PC-9 (cell line): ENCODE measurements at regions of chr7 and their contacts with region 1.

Region 1: DNA sequence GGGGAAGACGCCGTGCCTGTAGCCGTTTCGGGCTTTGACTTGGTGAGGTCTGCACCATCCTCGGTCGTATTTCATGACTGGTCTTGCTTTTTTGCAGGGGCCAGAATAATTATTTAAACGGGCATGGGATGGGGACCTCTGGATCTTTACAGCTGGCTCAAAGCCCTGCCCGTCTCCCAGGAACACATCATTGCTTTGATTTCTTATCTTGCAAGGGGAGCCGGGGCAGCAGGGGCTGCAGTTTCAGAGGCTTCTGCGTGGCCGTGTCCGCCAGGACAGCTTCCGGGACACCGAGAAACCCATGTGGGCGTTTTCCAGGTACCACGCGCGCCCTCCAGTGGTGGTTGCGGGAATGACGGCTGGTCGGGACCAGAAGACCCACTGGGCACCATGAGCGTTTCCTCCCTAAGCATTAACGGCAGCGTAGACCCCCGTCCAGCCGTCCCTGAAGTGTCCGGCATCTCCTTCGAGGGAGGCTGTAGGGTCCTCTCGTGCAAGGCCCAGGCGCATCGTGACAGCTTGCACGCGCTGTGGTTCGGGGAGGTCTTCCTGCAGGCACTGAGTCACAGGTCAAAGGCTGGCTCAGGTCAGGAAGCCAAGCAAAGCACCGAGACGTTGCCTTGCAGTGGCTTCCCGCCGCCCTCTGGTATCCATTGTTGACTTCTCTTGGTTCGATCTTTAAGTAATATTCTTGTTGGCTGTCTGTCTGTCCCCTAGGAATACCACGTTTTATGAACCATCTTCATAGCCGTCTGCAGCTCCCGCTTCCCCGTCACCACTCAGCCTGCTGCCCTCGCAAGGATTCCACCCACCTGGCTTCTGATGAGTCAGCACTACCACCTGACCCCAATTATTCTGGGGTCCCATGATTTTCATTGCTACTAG is 16.2 kb upstream of the ZFAND2A start:
- DNase-seq: peak; percentile 71 to 94
- H3K4me3 ChIP-seq: peak overlapping the region; percentile 41; the same call in 1 of the 2 replicates
- H3K27ac ChIP-seq: no peak overlapping the region
- H3K4me1 ChIP-seq: peaks cover 11% of the 10 kb centered on the region
- H3K27me3 ChIP-seq: 0 out of 2 replicates have a peak, but pooled peaks cover 10% of the 10 kb centered on the region
- CTCF ChIP-seq: peak; percentile 99

Region 2: DNA sequence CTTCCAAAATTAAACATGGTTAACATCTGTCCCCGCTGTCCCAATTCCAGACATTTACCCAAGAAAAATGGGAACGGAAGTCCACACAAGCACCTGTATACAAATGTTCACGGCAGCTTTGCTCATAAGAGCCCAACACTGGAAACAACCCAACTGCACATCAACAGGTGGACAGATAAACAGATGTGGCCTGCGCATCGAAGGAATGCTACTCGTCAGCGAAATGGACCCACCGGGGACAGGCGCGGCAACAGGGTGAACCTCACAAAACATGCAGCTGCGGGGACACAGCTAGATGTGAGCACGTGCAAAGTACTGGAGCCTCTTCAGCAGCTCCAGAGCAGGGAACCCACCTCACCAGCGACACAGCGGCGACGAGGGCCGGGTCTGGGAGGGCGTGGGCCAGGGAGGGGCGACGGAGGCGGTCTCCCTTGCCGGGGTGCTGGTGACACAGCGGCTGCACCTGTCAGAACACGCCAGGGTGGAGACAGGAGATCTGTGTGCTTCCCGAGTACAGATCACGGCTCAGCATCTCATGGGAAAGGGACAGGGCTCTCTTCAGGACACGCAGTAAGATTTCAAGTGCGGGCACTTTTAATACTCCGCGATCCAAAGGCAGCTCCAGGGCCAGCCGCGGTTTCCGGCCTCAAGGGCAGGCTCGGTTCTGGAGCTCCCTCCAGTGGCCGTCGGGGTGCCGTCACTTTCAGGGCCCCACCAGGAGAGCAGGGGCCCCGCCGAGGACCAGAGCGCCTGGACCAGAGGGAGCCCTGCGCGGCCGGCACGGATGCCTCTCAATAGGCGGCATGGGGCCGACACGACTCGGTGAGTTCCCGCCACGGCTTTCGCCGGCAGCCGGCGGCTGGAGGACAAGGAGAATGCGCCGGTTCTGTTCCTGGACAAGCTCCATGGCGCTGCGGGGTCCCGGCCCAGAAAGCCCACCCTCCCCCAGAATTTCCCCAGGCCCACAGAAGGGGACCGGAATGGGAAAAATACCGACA is 110.6 kb before region 1 on chr7:
- CTCF ChIA-PET with region 1: interaction called, 4 read pairs
- POLR2A ChIA-PET with region 1: no interaction called
- intact Hi-C with region 1: loop called (anchors 1 kb)
- DNase-seq: peak in 1 of 2 experiments; percentile 82
- H3K4me3 ChIP-seq: no peak overlapping the region
- H3K27ac ChIP-seq: no peak overlapping the region
- H3K4me1 ChIP-seq: no peaks in the 10 kb centered on the region
- H3K27me3 ChIP-seq: no peaks in the 10 kb centered on the region
- CTCF ChIP-seq: peak; percentile 80

Region 3: GRCh38 chr7:1275451-1276381 is 99.5 kb after region 1 on chr7:
- CTCF ChIA-PET with region 1: no interaction called
- POLR2A ChIA-PET with region 1: no interaction called
- intact Hi-C with region 1: no loop called
- DNase-seq: no peak
- H3K4me3 ChIP-seq: no peak overlapping the region
- H3K27ac ChIP-seq: no peak overlapping the region
- H3K4me1 ChIP-seq: no peaks in the 10 kb centered on the region
- H3K27me3 ChIP-seq: peaks cover 65% of the 10 kb centered on the region
- CTCF ChIP-seq: no peak